ENCODE measurements at regions of chr6 and their contacts with region 1.

Region 1: GRCh38 chr6:163460307-163460782 is 45.8 kb downstream of the QKI start:
- DNase-seq: peak; percentile 31
- H3K4me3 Mint-ChIP-seq: peak overlapping the region; percentile 93
- H3K27ac Mint-ChIP-seq: peak overlapping the region; percentile 98
- H3K4me1 Mint-ChIP-seq: peaks cover 73% of the 10 kb centered on the region
- H3K27me3 Mint-ChIP-seq: no peaks in the 10 kb centered on the region

Region 2: DNA sequence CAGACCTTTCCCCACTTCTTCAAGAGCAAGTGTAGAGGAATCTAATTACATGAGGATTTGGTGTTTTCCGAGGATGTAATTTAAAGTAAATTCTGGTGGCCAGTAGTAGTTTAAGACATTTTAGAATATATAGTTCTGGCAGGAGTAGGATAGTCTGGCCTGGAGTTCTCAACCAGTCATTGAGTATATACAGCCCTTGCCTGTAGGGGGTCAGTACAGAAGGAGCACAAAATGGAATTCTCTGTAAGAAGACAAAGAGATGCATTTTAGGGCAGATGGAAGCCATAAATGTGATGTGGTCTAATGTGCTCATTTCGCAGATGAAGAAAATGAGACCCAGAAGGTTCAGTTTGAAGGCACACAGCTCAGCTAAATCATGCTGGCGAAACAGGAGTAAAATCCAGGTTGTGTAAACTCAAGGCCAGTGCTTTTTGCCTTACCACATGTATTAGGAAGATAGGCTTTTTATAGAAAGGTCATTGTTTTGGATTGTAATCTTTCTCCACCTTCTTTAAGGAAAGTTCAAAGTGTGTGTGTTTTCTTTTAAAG is 16.3 kb before region 1 on chr6:
- intact Hi-C with region 1: loop called (anchors 2 kb)
- DNase-seq: no peak
- H3K4me3 Mint-ChIP-seq: no peak overlapping the region
- H3K27ac Mint-ChIP-seq: no peak overlapping the region
- H3K4me1 Mint-ChIP-seq: peaks cover 16% of the 10 kb centered on the region
- H3K27me3 Mint-ChIP-seq: no peaks in the 10 kb centered on the region

Region 3: GRCh38 chr6:163490826-163491577 is 30.7 kb after region 1 on chr6:
- intact Hi-C with region 1: loop called (anchors 5 kb)
- DNase-seq: no peak
- H3K4me3 Mint-ChIP-seq: no peak overlapping the region
- H3K27ac Mint-ChIP-seq: peak overlapping the region; percentile 63
- H3K4me1 Mint-ChIP-seq: peaks cover 32% of the 10 kb centered on the region
- H3K27me3 Mint-ChIP-seq: no peaks in the 10 kb centered on the region